ENCODE measurements at regions of chr22 and their contacts with region 1.

Region 1: DNA sequence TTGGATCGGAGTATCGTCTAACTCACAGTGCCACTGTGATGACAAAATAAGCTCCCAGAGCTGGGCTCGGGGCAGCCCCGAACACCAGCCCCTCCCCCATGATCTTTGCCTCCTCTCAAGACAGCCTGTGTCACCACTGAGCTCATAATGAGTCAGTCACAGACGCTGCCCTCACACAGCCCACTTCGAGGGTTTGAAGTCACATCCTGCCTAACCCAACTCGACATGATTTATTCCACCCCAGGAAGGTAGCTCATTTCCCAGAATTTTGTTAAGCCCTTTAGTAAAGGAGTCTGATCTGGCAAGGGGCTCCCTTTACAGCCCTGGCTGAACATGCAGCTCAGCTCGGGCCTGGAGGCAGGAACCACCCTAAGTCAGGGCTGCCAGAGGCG is 22.8 kb downstream of the MYH9 start:
- DNase-seq: peak; percentile 74 to 87
- H3K4me3 ChIP-seq: no peak overlapping the region
- H3K27ac ChIP-seq: peak overlapping the region; percentile 53
- H3K4me1 ChIP-seq: peaks cover 99% of the 10 kb centered on the region
- H3K27me3 ChIP-seq: no peaks in the 10 kb centered on the region
- CTCF ChIP-seq: no peak

Region 2: GRCh38 chr22:36311386-36312358 is 53.3 kb before region 1 on chr22:
- CTCF ChIA-PET with region 1: interaction called, 16 read pairs
- POLR2A ChIA-PET with region 1: interaction called, 10 read pairs
- intact Hi-C with region 1: no loop called
- DNase-seq: peak; percentile 72 to 78
- H3K4me3 ChIP-seq: no peak overlapping the region
- H3K27ac ChIP-seq: no peak overlapping the region
- H3K4me1 ChIP-seq: 0 out of 2 replicates have a peak, but pooled peaks cover 9% of the 10 kb centered on the region
- H3K27me3 ChIP-seq: no peaks in the 10 kb centered on the region
- CTCF ChIP-seq: no peak

Region 3: DNA sequence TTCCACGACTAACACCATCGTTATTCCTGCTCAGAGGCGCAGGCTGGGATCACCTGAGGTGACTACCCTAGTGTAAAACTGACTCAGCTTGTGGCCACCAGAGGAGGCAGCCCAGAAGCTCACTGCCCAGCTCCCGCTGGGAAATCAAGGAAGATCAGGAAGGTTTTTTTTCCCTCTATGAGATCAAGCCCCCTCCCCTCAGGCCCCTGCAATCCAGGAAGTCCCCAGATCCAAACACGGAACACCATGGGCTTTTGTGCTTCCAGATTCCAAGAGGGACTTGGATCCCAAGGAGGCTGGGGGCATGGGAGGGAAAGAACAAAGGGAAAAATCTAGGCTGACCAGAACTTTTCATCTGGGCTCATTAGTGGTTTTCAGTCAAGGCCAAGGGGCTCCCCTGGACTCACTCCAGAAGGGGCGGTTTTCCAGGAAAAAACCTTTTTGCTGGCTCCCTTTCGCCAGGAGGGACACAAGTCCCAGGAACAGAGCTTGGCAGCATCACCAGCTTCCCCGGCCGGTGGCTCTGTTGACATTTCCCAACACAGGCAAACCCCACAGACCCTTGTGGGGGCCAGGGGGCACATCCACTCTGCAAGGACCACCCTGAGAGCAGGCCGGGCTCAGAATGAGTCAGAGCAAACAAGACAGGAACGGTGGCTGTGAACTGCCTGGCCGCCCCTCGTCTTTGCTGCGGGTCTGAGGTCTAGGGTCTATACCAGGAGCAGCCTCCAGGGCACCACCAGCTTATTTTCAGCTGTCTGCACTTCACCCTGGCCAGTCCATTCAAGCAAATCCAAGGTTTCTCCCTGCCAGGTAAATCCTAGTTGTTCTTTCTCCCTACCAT is 14.0 kb before region 1 on chr22:
- CTCF ChIA-PET with region 1: interaction called, 4 read pairs
- POLR2A ChIA-PET with region 1: interaction called, 24 read pairs
- intact Hi-C with region 1: no loop called
- DNase-seq: no peak
- H3K4me3 ChIP-seq: no peak overlapping the region
- H3K27ac ChIP-seq: peak overlapping the region; percentile 25
- H3K4me1 ChIP-seq: peaks cover 22% of the 10 kb centered on the region
- H3K27me3 ChIP-seq: no peaks in the 10 kb centered on the region
- CTCF ChIP-seq: no peak

Region 4: DNA sequence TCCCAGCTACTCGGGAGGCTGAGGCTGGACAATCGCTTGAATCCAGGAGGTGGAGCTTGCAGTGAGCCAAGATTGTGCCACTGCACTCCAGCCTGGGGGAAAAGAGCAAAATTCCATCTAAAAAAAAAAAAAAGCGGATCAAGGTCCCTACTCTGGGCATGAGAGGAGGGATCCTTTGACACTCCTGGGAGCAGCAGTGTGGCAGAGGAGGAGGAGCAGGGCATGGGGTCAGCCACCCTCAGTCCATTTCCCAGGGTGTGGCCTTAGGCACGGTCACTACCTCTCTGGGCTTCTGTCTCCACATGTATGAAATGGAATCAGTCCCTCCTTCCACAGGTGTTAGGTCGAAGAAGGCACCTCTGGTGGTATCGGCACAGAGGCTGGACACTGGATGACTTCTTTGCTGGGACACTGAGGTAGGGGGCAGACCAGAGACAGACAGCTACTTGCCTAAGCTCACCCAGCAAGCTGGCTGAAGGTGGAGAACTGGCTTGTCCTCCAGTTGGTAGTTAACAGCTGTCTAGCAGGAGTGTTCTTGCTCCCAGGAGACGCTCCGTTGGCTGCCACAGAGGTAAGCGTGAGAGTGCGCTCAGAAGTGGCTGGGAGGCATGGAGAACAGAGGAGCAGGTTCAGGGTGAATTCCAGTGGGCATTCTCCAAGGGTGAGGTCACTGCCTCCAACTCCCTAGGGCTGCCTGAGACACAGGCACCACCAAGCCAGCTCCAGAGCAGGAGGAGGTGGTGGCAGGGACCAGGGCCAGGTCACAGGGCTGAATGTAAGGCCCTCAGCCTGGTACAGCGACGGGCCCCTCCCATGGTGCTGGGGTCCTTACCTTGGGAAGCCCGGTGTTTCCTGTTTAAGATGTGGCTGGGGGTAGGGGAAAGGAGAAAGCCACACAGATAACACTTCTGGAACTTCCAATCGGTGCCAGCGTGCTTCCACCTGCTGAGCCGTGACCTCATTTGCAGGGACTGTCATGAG is 96.9 kb after region 1 on chr22:
- CTCF ChIA-PET with region 1: no interaction called
- POLR2A ChIA-PET with region 1: interaction called, 10 read pairs
- intact Hi-C with region 1: loop called (anchors 1 kb)
- DNase-seq: peak; percentile 96 to 99
- H3K4me3 ChIP-seq: no peak overlapping the region
- H3K27ac ChIP-seq: peak overlapping the region; percentile 72
- H3K4me1 ChIP-seq: peaks cover 92% of the 10 kb centered on the region
- H3K27me3 ChIP-seq: no peaks in the 10 kb centered on the region
- CTCF ChIP-seq: no peak

Region 5: GRCh38 chr22:36478966-36479365 is 114.0 kb after region 1 on chr22:
- CTCF ChIA-PET with region 1: no interaction called
- POLR2A ChIA-PET with region 1: no interaction called
- intact Hi-C with region 1: no loop called
- DNase-seq: no peak
- H3K4me3 ChIP-seq: no peak overlapping the region
- H3K27ac ChIP-seq: no peak overlapping the region
- H3K4me1 ChIP-seq: peaks cover 20% of the 10 kb centered on the region
- H3K27me3 ChIP-seq: no peaks in the 10 kb centered on the region
- CTCF ChIP-seq: no peak

Region 6: DNA sequence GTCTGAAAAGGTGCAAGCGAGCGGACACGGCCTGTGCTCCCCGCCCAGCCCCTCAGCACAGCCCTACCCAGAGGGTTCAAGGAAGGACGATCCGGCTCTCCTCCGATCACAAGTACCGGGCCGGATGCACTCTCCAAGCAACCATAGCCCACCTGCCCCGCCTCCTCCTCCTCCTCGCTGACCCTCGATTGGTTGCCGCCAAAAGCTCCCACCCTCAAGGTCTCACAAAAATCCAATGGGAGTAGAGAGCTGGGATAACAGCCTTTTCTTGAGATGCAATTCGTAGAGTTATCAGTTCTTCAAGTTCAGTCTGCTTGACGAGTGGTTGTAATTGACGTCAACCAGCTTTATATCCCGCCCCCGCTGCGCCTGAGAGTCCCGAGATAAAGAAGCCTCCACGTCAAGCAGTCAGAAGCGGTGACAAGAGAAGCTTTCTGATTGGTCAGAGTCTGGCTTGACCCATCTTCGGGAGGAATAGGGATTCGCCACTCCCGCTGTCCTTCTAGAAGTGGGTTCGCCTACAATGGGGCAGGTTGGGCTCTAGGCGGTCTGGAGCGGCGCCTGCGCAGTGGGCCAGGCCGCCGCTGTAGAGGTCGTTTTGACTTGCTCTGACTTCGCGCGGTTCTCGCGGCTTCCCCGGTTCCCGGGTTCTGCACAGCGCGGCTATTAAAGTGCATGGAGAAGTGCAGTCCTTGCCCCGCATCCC is 411.1 kb after region 1 on chr22 and contains the start of gene IFT27:
- CTCF ChIA-PET with region 1: no interaction called
- POLR2A ChIA-PET with region 1: interaction called, 14 read pairs
- intact Hi-C with region 1: no loop called
- DNase-seq: peak; percentile 99 to 100
- H3K4me3 ChIP-seq: peak within 1 kb of the TSS; percentile 76
- H3K27ac ChIP-seq: no peak within 1 kb of the TSS
- H3K4me1 ChIP-seq: peaks cover 13% of the 10 kb centered on the region
- H3K27me3 ChIP-seq: no peaks in the 10 kb centered on the region
- CTCF ChIP-seq: no peak
- total RNA-seq, gene IFT27: 74.2 and 84.2 TPM in 2 replicates

Measured in PC-9 (cell line).